Ascending aorta (tissue), 2 donors: ENCODE measurements at regions of chr4 and their contacts with region 1.

Region 1: DNA sequence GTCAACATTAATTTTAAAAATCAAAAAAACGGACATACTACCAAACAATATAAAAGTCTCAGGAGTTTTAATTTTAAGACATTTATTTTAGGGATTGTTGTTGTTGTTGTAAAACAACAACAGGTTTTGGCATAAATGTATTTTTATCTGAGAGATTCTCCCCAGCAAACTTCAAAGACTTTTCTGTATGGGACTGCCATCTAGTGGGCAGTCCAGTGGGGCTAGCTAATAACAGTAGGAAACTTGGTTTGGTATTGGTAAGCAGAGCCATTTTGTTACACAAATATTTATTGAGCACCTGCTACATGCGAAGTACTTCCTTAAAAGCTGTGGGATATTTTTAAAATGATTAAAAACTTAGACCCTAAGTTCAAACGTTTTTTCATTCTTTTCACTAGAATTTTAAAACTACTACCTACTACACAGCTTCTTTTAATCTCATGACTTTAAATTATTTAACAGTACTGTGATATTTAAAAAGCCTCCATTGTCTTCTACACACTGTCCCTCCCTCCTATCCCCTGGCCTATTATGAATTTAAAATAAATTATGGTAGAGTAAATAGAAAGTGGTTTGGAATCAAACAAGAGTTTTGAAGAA is 1028.4 kb upstream of the INTU start:
- DNase-seq: no peak
- H3K4me3 ChIP-seq: no peak overlapping the region
- H3K27ac ChIP-seq: no peak overlapping the region
- H3K4me1 ChIP-seq: no peaks in the 10 kb centered on the region
- H3K27me3 ChIP-seq: no peaks in the 10 kb centered on the region
- CTCF ChIP-seq: peak in 2 of 3 experiments; percentile 47 to 65

Region 2: GRCh38 chr4:125750828-125751466 is 853.4 kb before region 1 on chr4:
- intact Hi-C with region 1: loop called (anchors 10 kb)
- DNase-seq: peak in 1 of 2 donors; percentile 61
- H3K4me3 ChIP-seq: no peak overlapping the region
- H3K27ac ChIP-seq: no peak overlapping the region
- H3K4me1 ChIP-seq: peaks cover 0 to 2% of the 10 kb centered on the region in 2 donors
- H3K27me3 ChIP-seq: no peaks in the 10 kb centered on the region
- CTCF ChIP-seq: peak; percentile 12 to 42 (median 27)

Region 3: DNA sequence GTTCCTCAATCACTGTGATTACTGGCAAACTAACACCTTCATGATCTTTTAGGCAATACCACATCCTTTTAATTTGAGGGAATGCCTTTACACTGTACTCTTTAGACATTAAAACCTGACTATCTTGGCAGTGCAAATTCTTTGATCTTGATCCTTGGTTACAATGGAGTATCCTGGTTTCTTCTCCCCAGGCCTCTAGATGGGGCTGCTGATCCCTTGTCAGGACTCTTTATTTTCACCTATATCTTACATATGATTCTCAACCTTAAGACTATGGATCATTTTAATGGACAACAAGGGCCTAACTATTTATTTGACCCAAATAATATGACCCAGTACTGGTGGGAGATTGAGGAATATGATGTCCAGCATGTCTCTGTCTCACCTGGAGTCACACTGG is 22.9 kb after region 1 on chr4:
- intact Hi-C with region 1: no loop called
- DNase-seq: no peak
- H3K4me3 ChIP-seq: no peak overlapping the region
- H3K27ac ChIP-seq: no peak overlapping the region
- H3K4me1 ChIP-seq: no peaks in the 10 kb centered on the region
- H3K27me3 ChIP-seq: no peaks in the 10 kb centered on the region
- CTCF ChIP-seq: no peak